Psoas muscle (tissue), 8 donors: ENCODE measurements at regions of chr3 and their contacts with region 1.

Region 1: DNA sequence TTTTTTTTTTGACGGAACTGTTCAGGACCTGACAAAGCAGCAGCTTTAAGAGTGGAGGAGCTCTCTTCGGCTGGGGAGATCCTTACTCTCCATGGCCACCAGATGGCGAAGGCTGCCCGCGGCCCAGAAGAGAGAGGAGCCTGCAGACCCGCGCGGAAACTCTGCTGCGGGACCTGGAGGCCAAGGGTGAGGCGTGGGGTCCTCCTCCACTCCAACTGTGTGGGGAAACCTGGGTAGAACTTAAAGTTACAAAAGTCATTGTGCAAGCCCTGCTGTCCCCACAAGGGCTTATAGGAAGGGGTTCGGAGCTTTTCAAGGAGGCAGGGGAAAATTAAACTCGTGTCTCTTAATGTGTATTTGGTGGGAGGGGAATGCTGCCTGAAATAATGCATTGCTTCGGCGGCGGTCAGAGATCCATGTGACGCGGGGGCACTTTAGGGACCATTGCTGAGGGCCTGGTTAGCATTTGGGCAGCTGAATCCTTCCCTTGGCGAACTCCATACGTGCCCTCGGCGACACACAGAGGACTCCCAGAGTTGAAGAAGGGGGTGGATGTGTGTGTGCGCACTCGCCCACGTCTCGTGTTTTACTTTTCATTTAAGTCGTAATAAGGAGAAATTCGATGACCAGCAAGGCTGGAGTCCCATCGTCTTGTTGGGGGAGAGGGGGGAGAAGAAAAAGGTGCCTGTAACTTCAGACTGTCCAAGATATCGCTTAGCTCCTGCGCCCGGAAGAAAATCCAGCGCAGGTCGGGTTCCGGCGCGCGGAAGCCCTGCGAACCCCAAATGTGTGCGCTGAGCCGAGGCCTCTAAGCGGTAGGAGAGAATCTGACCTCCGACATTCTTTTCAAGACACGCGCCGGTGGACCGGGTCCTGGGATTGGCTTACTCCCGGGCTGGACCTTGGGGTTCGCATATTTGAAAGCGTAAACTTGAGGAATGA is 9.7 kb downstream of the EOMES start:
- DNase-seq: peak; percentile 70 to 83
- ATAC-seq: peak; percentile 89 to 95 (median 94)
- H3K4me3 ChIP-seq: peak overlapping the region; percentile 73
- H3K27ac ChIP-seq: no peak overlapping the region
- H3K4me1 ChIP-seq: peaks cover 19% of the 10 kb centered on the region
- H3K27me3 ChIP-seq: peaks cover 0 to 76% (median 26%) of the 10 kb centered on the region in 3 donors
- CTCF ChIP-seq: peak; percentile 76

Region 2: DNA sequence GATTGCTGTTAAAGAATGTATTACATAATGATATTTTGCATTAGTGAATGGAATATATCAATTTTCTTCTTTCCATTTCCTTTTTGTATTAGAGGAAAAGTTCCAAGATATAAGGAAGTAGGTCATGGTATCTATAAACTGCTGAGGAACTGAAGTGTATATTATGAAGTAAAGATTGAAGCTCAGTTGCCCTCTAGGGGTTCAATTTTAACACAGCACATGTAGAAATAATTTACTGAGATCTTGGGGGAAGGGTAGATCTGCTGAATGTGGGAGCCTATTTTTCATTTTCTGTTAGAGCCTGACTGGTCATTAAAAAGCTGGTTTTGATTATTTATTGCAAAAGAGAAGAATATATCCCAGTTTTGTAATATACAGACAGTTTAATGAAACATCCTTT is 574.2 kb after region 1 on chr3:
- intact Hi-C with region 1: loop called (anchors 5 to 10 kb)
- DNase-seq: no peak
- ATAC-seq: peak in 2 of 4 donors; percentile 56 to 77
- H3K4me3 ChIP-seq: no peak overlapping the region
- H3K27ac ChIP-seq: no peak overlapping the region
- H3K4me1 ChIP-seq: no peaks in the 10 kb centered on the region
- H3K27me3 ChIP-seq: no peaks in the 10 kb centered on the region
- CTCF ChIP-seq: peak; percentile 59

Region 3: DNA sequence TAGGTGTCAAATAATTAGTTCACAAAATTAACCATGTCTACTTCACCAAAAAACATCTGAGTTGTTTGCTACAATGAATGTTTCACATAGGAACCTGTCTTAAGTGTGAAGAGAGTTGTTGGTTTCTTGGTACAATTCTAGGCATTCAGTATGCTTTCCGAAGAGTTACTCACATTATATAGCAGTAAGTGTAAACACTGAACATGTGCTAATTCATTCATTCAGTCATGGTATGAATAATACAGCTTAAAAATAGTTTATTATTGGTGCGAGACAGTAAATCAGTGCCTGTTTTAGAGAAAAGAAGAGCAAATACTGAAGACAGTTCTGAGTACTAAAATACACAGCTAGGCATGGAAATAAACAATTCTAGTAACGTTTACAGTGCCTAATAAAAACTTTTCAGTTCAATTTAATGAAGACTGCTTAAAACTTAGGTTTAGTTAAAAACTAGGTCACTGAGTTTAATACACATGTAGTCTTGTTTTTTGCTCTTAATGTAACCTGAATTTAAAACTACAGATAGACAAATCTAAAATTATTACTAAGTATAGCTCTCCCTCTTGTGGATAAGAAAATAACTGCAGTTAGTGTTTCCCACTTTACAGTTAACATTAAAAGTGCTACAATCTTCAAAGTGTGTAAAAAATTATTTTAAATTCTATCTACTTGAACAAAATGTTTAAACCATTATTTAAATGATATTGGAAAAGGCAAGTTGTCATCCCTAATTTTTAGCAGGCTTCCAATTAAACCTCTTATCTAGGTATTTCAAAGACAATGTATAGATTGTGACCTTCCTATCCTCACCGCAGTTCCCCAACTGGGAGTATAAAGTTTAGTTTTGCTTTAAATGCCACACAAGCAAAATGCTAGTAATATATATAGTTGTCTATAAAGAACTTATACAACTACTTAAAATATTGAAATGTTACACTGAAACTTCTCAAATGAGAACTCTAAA is 616.1 kb after region 1 on chr3:
- intact Hi-C with region 1: loop called (anchors 2 to 5 kb)
- DNase-seq: no peak
- ATAC-seq: peak in 2 of 4 donors; percentile 55 to 76
- H3K4me3 ChIP-seq: no peak overlapping the region
- H3K27ac ChIP-seq: no peak overlapping the region
- H3K4me1 ChIP-seq: no peaks in the 10 kb centered on the region
- H3K27me3 ChIP-seq: no peaks in the 10 kb centered on the region
- CTCF ChIP-seq: peak; percentile 77